ENCODE measurements at regions of chr13 and their contacts with region 1.

Region 1: GRCh38 chr13:20828539-20829364 is 55.0 kb upstream of the EEF1AKMT1 start:
- DNase-seq: peak; percentile 86
- H3K4me3 Mint-ChIP-seq: no peak overlapping the region
- H3K27ac Mint-ChIP-seq: no peak overlapping the region
- H3K4me1 Mint-ChIP-seq: peaks cover 7% of the 10 kb centered on the region
- H3K27me3 Mint-ChIP-seq: no peaks in the 10 kb centered on the region

Region 2: DNA sequence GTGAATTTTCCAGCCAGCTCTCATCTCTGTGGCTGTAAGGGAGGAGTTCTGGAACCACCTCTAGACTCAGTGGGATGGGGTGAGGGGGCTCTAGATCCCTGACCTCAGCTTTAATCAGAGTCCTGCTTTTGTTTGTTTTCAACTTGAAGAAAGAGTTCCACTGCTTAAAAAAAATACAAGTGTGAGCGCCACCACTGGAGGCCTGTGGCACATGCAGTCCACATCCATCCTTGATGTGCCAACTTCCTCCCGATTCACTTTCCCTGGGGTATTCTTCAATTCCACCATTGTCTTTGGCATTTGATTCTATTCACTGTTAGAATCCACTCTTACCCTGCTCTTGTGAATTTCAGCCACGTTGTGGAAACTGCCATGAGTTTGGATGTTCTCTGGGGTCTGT is 534.3 kb before region 1 on chr13:
- intact Hi-C with region 1: no loop called
- DNase-seq: no peak
- H3K4me3 Mint-ChIP-seq: no peak overlapping the region
- H3K27ac Mint-ChIP-seq: no peak overlapping the region
- H3K4me1 Mint-ChIP-seq: no peaks in the 10 kb centered on the region
- H3K27me3 Mint-ChIP-seq: peaks cover 11% of the 10 kb centered on the region

Region 3: DNA sequence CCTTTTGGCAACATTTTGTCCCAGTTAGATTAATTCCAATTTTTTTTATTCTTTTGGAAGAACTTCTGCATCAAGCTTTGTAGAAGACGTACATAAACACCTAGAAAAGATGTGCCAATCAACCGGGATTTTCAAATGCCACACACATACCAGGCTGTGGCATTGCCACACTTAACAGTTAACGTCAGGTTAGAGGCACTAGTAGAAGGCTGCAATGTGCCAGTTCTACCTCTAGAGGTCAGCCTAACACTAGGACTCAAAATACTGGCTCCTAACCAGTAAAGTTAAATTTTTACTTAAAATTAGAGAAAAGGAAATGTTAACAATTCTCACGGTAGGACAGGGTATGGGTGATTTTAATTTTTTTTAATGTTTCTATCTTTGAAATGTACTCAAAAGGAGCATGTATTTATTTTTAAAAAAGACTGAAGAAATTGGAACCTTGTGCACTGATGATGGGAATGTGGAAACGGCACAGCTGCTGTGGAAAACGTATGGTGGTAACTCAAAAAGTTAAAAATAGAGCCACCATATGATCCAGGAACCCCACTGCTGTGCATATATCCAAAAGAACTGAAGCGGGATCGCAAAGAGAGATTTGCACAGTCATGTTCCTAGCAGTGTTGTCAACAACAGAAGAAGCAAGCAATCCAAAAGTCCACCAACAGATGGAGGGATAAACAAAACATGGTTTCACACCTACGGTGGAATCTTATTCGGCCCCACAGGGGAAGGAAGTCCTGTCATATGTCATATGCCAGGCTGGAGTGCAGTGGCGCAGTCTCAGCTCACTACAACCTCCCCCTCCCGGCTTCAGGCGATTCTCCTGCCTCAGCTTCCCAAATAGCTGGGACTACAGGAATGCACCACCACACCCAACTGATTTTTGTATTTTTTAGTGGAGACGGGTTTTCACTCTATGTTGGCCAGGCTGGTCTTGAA is 333.4 kb before region 1 on chr13:
- intact Hi-C with region 1: loop called (anchors 1 kb)
- DNase-seq: peak; percentile 90
- H3K4me3 Mint-ChIP-seq: no peak overlapping the region
- H3K27ac Mint-ChIP-seq: no peak overlapping the region
- H3K4me1 Mint-ChIP-seq: no peaks in the 10 kb centered on the region
- H3K27me3 Mint-ChIP-seq: no peaks in the 10 kb centered on the region

Region 4: DNA sequence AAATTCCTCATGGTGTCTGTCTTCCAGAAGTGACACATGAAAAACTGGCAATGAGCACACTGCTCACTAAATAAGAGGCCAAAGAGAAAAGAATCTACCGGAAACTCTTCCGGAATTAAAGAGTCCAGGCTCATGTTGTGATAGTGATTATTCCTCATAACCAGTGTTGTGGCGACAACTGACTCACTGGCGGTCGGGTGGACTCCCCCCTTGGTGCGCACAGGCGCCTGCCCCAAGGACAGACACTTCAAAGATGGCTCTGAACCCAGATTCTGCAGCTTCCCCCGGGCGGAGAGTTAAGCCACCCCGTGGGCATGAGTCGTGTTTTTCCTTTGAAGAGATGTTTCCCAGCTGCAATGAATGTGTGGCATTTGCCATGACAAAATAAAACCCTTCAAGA is 115.0 kb before region 1 on chr13:
- intact Hi-C with region 1: loop called (anchors 2 kb)
- DNase-seq: no peak
- H3K4me3 Mint-ChIP-seq: no peak overlapping the region
- H3K27ac Mint-ChIP-seq: no peak overlapping the region
- H3K4me1 Mint-ChIP-seq: peaks cover 8% of the 10 kb centered on the region
- H3K27me3 Mint-ChIP-seq: peaks cover 15% of the 10 kb centered on the region

Region 5: GRCh38 chr13:20869542-20869941 is 40.8 kb after region 1 on chr13:
- intact Hi-C with region 1: no loop called
- DNase-seq: no peak
- H3K4me3 Mint-ChIP-seq: no peak overlapping the region
- H3K27ac Mint-ChIP-seq: no peak overlapping the region
- H3K4me1 Mint-ChIP-seq: peaks cover 8% of the 10 kb centered on the region
- H3K27me3 Mint-ChIP-seq: no peaks in the 10 kb centered on the region

Measured in activated CD4-positive, alpha-beta T cell treated with anti-CD3 and anti-CD28 coated beads, Interleukin-2, amount 10 ng/mL, durations not matched to agents 24 days and 14 days (primary cell).